Sciatic nerve (tissue), 2 donors: ENCODE measurements at regions of chr2 and their contacts with region 1.

Region 1: DNA sequence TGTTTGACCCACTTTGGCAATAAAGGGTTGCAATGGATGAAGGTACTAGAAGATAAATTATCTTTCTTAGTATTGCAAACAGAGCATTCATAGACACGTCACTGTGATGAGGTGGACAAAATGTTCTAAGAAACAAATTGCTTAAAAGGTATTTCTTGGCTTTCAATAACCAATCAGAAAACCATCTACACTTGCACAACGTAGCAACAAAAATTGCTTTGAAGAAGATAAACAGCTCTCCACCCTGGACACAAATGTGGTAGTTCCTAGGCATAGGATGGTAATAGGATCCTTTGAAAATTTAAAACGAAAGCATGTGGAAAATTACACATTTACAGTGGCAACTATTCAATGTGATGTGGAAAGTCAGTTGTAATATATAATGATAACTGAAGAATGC is 439.9 kb upstream of the ETAA1 start:
- DNase-seq: no peak
- ATAC-seq: peak; percentile 85

Region 2: GRCh38 chr2:65620524-65620923 is 1336.7 kb before region 1 on chr2:
- intact Hi-C with region 1: loop called (anchors 10 kb)
- DNase-seq: no peak
- ATAC-seq: no peak

Region 3: DNA sequence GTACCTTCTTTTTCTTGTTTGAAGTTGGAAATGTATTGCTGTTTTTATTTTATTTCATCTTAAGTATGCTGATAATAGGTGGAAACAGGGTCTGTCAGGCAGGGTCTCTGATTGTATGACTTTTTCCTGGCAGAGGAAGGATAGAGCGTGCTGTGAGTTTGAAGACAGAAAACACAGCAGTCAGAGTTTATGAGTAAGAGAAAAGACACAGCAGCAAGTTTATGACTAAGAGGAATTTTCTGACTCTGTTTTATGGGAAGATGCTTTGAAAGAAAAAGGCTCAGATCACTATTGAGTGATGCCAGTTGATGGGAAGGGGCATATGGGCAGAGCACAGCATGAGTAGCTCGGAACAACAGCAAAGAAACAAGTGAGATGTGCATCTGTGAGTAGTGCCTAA is 143.2 kb before region 1 on chr2:
- intact Hi-C with region 1: no loop called
- DNase-seq: no peak
- ATAC-seq: no peak

Region 4: GRCh38 chr2:66981074-66981473 is 23.9 kb after region 1 on chr2:
- intact Hi-C with region 1: no loop called
- DNase-seq: no peak
- ATAC-seq: no peak